BJ (cell line): ENCODE measurements at regions of chr15 and their contacts with region 1.

Region 1: GRCh38 chr15:98085003-98085639 is 124.6 kb downstream of the ARRDC4 start:
- DNase-seq: no peak
- H3K4me3 ChIP-seq: no peak overlapping the region
- H3K27me3 ChIP-seq: no peaks in the 10 kb centered on the region
- CTCF ChIP-seq: peak; percentile 63

Region 2: DNA sequence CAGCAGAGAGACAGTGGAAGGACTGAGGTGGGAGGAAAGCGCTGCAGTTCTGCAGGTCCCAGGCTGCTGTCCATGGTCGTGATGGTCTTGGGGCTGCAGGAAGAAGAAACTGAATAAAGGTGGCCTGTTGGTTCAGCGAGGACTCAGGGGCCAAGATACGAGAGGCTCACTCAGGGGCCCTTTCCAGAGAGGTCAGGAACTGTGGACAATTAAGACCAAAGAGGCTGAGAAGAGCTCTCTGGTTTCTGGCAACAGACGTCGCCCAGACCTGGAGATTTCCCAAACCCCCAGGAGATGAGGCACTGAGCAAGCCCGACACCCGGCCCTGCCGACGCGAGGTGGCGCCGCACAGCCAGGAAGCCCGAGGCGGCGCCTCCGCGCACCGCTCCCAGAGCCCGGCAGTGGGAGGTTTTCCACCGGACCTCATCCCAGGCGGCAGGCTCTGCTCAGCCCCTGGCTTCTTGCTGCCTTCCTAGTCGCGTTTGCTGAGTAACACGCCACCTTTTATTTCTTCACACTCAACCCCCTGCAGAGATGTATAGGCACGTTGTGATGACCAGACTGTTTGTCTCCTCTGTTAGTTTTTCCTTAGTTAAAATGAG is 181.0 kb before region 1 on chr15:
- CTCF ChIA-PET with region 1: interaction called, 21 read pairs
- POLR2A ChIA-PET with region 1: no interaction called
- DNase-seq: no peak
- H3K4me3 ChIP-seq: no peak overlapping the region
- H3K27me3 ChIP-seq: no peaks in the 10 kb centered on the region
- CTCF ChIP-seq: peak; percentile 82

Region 3: DNA sequence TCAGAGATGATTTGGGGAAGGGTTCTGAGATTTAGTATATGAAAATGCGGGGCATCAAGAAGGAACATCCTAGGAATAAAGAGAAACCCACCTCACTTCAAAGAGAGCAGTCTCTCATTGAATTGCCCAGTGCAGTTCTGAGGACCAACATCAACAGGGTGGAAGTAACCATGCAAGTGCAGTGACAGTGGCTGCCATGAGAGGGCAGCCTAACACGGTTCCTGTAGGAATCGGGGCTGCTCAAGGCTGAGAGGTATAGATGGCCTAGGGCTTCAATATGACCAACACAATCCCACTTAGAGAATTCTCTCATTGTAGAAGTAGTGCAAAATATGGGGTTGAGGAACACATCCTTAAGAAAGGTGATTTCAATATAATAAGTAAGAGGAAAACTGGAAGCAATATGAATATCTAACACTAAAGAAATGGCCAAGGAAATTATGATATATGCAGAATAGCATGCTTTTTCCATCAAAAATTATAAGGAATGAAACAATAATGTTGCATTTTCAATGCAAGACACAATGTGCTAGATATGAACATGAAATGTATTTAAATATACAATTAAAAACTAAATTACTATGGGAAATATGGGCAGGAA is 175.7 kb before region 1 on chr15:
- CTCF ChIA-PET with region 1: interaction called, 21 read pairs
- POLR2A ChIA-PET with region 1: no interaction called
- DNase-seq: no peak
- H3K4me3 ChIP-seq: no peak overlapping the region
- H3K27me3 ChIP-seq: no peaks in the 10 kb centered on the region
- CTCF ChIP-seq: peak; percentile 98

Region 4: GRCh38 chr15:97995881-97996603 is 89.1 kb before region 1 on chr15:
- CTCF ChIA-PET with region 1: interaction called, 18 read pairs
- POLR2A ChIA-PET with region 1: no interaction called
- DNase-seq: no peak
- H3K4me3 ChIP-seq: no peak overlapping the region
- H3K27me3 ChIP-seq: no peaks in the 10 kb centered on the region
- CTCF ChIP-seq: peak; percentile 51